Adrenal gland (tissue), 19 donors: ENCODE measurements at regions of chr15 and their contacts with region 1.

Region 1: GRCh38 chr15:76190834-76191538 is 120.3 kb downstream of the ETFA start:
- DNase-seq: peak; percentile 76 to 90 (median 88)
- H3K4me3 ChIP-seq: no peak overlapping the region
- H3K27ac ChIP-seq: no peak overlapping the region
- H3K4me1 ChIP-seq: peaks cover 7 to 13% of the 10 kb centered on the region in 2 donors
- H3K27me3 ChIP-seq: no peaks in the 10 kb centered on the region
- CTCF ChIP-seq: peak; percentile 71 to 91 (median 85)
- POLR2A ChIP-seq: no peak

Region 2: GRCh38 chr15:76108021-76108723 is 82.8 kb before region 1 on chr15:
- intact Hi-C with region 1: no loop called
- DNase-seq: peak; percentile 36 to 81 (median 63)
- H3K4me3 ChIP-seq: no peak overlapping the region
- H3K27ac ChIP-seq: no peak overlapping the region
- H3K4me1 ChIP-seq: no peaks in the 10 kb centered on the region
- H3K27me3 ChIP-seq: no peaks in the 10 kb centered on the region
- CTCF ChIP-seq: no peak
- POLR2A ChIP-seq: peak in 1 of 2 donors; percentile 15

Region 3: DNA sequence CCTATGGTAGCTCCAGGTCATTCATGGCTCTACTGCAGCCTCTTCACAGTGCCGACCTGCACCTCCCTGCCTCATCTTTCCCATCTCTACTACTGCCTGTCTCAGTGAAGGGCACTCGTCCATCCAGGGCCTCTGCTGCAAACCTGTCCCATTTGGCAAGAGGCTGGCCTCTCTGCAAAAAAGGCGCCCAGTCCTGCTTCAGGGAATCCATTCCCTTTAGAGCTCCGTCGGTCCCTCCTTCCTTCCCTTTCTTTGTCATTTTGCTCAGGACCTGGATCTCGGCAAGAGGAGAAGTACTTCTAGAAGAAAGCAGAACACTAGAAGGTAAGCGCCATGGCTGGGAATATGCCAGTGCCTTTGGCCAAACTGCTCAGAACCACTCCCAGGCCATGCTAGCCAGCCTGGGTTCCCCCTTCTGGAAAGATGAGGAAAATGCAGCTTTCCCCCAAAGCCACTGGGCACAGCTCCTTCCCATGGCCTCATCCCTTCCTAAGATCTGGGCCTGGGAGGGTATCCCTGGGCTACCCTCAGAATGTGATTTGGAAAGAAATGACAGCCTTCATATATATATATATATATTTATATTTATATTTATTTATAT is 139.2 kb after region 1 on chr15:
- intact Hi-C with region 1: loop called in 1 of 2 experiments (anchors 5 kb)
- DNase-seq: peak; percentile 57 to 83 (median 74)
- H3K4me3 ChIP-seq: no peak overlapping the region
- H3K27ac ChIP-seq: no peak overlapping the region
- H3K4me1 ChIP-seq: no peaks in the 10 kb centered on the region
- H3K27me3 ChIP-seq: peaks cover 34% of the 10 kb centered on the region
- CTCF ChIP-seq: peak; percentile 42 to 77 (median 62)
- POLR2A ChIP-seq: no peak

Region 4: GRCh38 chr15:76837474-76837873 is 646.5 kb after region 1 on chr15:
- intact Hi-C with region 1: loop called in 1 of 2 experiments (anchors 10 kb)
- DNase-seq: no peak
- H3K4me3 ChIP-seq: no peak overlapping the region
- H3K27ac ChIP-seq: no peak overlapping the region
- H3K4me1 ChIP-seq: no peaks in the 10 kb centered on the region
- H3K27me3 ChIP-seq: no peaks in the 10 kb centered on the region
- CTCF ChIP-seq: no peak
- POLR2A ChIP-seq: no peak